Thyroid gland (tissue), 4 donors: ENCODE measurements at regions of chr20 and their contacts with region 1.

Region 1: GRCh38 chr20:16801919-16802911 is 54.1 kb downstream of the OTOR start:
- DNase-seq: peak; percentile 82 to 85
- H3K4me3 ChIP-seq: no peak overlapping the region
- H3K27ac ChIP-seq: peak overlapping the region in 1 of 3 donors; percentile 13
- H3K4me1 ChIP-seq: peaks cover 14 to 15% of the 10 kb centered on the region in 2 donors
- H3K27me3 ChIP-seq: no peaks in the 10 kb centered on the region
- CTCF ChIP-seq: peak; percentile 77 to 94 (median 90)
- POLR2A ChIP-seq: no peak

Region 2: GRCh38 chr20:16761305-16761829 is 40.8 kb before region 1 on chr20:
- intact Hi-C with region 1: no loop called
- DNase-seq: peak; percentile 60 to 66
- H3K4me3 ChIP-seq: no peak overlapping the region
- H3K27ac ChIP-seq: peak overlapping the region; percentile 71 to 94 (median 76)
- H3K4me1 ChIP-seq: peaks cover 15 to 30% of the 10 kb centered on the region in 2 donors
- H3K27me3 ChIP-seq: no peaks in the 10 kb centered on the region
- CTCF ChIP-seq: peak; percentile 29 to 96 (median 80)
- POLR2A ChIP-seq: no peak

Region 3: GRCh38 chr20:17281478-17281877 is 479.3 kb after region 1 on chr20:
- intact Hi-C with region 1: loop called (anchors 10 kb)
- DNase-seq: peak; percentile 53 to 68
- H3K4me3 ChIP-seq: no peak overlapping the region
- H3K27ac ChIP-seq: no peak overlapping the region
- H3K4me1 ChIP-seq: no peaks in the 10 kb centered on the region
- H3K27me3 ChIP-seq: no peaks in the 10 kb centered on the region
- CTCF ChIP-seq: peak in 4 of 6 experiments; percentile 28 to 58 (median 46)
- POLR2A ChIP-seq: no peak

Region 4: DNA sequence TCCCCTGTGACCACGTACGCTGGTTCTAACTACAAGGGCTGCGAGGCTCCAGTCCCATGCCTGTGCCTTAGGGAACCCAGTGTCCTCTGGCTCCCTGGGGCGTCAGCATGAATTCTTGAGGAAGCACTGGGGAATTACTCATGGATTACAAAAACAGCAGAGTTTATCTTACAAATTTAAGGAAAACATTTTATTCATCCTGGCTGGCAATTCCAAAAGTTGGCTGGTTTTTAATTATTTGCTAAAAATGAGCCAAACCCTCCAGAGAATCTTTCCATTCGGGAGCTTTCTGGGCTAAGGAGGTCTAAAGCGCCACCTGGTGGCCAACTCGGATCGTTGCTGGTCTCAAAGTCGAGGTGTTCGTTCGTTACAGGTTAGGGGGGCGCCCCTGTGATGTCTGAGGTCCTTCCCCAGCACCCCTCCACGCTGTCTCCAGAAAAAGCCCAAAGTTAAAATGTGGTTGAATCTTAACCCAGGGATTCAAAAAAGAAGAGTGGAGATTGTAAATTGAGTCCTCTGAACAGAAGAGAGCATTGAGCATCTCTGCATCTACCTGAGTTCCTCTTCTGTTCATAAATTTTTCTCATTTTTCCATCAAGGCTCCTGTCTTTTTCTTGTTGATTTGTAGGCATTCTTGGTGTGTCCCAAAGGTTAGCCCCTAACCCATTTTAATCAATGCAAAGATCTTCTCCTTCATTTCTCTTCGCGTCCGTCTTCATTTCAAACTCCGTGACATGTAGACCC is 629.6 kb after region 1 on chr20:
- intact Hi-C with region 1: loop called (anchors 5 kb)
- DNase-seq: peak; percentile 58 to 69
- H3K4me3 ChIP-seq: no peak overlapping the region
- H3K27ac ChIP-seq: no peak overlapping the region
- H3K4me1 ChIP-seq: peaks cover 0 to 7% of the 10 kb centered on the region in 2 donors
- H3K27me3 ChIP-seq: no peaks in the 10 kb centered on the region
- CTCF ChIP-seq: peak; percentile 65 to 90 (median 88)
- POLR2A ChIP-seq: no peak